Endothelial cell of umbilical vein (primary cell): ENCODE measurements at regions of chr9 and their contacts with region 1.

Region 1: GRCh38 chr9:8432224-8432623 is 632.6 kb upstream of the DMAC1 start:
- DNase-seq: peak; percentile 44
- H3K4me3 ChIP-seq: no peak overlapping the region
- H3K27ac ChIP-seq: no peak overlapping the region
- H3K4me1 ChIP-seq: peaks cover 9% of the 10 kb centered on the region
- H3K27me3 ChIP-seq: no peaks in the 10 kb centered on the region
- CTCF ChIP-seq: no peak
- POLR2A ChIP-seq: no peak

Region 2: GRCh38 chr9:8365029-8365428 is 67.2 kb before region 1 on chr9:
- CTCF ChIA-PET with region 1: no interaction called
- POLR2A ChIA-PET with region 1: no interaction called
- dilution Hi-C with region 1: no loop called
- intact Hi-C with region 1: no loop called
- DNase-seq: peak; percentile 94
- H3K4me3 ChIP-seq: peak overlapping the region in 1 of 3 experiments; percentile 22
- H3K27ac ChIP-seq: peak overlapping the region; percentile 98
- H3K4me1 ChIP-seq: peaks cover 41% of the 10 kb centered on the region
- H3K27me3 ChIP-seq: no peaks in the 10 kb centered on the region
- CTCF ChIP-seq: no peak
- POLR2A ChIP-seq: no peak

Region 3: GRCh38 chr9:8401961-8402705 is 30.1 kb before region 1 on chr9:
- CTCF ChIA-PET with region 1: no interaction called
- POLR2A ChIA-PET with region 1: no interaction called
- dilution Hi-C with region 1: no loop called
- intact Hi-C with region 1: loop called (anchors 2 kb)
- DNase-seq: no peak
- H3K4me3 ChIP-seq: no peak overlapping the region
- H3K27ac ChIP-seq: no peak overlapping the region
- H3K4me1 ChIP-seq: peaks cover 14% of the 10 kb centered on the region
- H3K27me3 ChIP-seq: no peaks in the 10 kb centered on the region
- CTCF ChIP-seq: no peak
- POLR2A ChIP-seq: no peak

Region 4: GRCh38 chr9:8447601-8448000 is 15.4 kb after region 1 on chr9:
- CTCF ChIA-PET with region 1: no interaction called
- POLR2A ChIA-PET with region 1: no interaction called
- dilution Hi-C with region 1: no loop called
- intact Hi-C with region 1: no loop called
- DNase-seq: no peak
- H3K4me3 ChIP-seq: no peak overlapping the region
- H3K27ac ChIP-seq: no peak overlapping the region
- H3K4me1 ChIP-seq: no peaks in the 10 kb centered on the region
- H3K27me3 ChIP-seq: no peaks in the 10 kb centered on the region
- CTCF ChIP-seq: no peak
- POLR2A ChIP-seq: no peak